Sigmoid colon (tissue), 7 donors: ENCODE measurements at regions of chr3 and their contacts with region 1.

Region 1: GRCh38 chr3:129316131-129317013 is 37.7 kb downstream of the HMCES start:
- DNase-seq: peak; percentile 93
- H3K4me3 ChIP-seq: peak overlapping the region; percentile 74 to 98 (median 89)
- H3K27ac ChIP-seq: peak overlapping the region; percentile 92 to 95 (median 92)
- H3K4me1 ChIP-seq: peaks cover 2 to 25% (median 19%) of the 10 kb centered on the region in 4 donors
- H3K27me3 ChIP-seq: no peaks in the 10 kb centered on the region
- CTCF ChIP-seq: peak; percentile 7 to 46 (median 34)
- EP300 ChIP-seq: peak in 1 of 4 donors; percentile 17
- POLR2A ChIP-seq: peak; percentile 99

Region 2: GRCh38 chr3:129183569-129184395 is 132.6 kb before region 1 on chr3 and contains the start of gene CNBP:
- intact Hi-C with region 1: loop called (anchors 2 kb)
- DNase-seq: peak; percentile 96
- H3K4me3 ChIP-seq: peak within 1 kb of the TSS; percentile 82 to 97 (median 92)
- H3K27ac ChIP-seq: peak within 1 kb of the TSS; percentile 99
- H3K4me1 ChIP-seq: peaks cover 0 to 58% (median 46%) of the 10 kb centered on the region in 4 donors
- H3K27me3 ChIP-seq: no peaks in the 10 kb centered on the region
- CTCF ChIP-seq: no peak
- EP300 ChIP-seq: peak in 1 of 4 donors; percentile 9
- POLR2A ChIP-seq: peak; percentile 97
- total RNA-seq, gene CNBP: 398 to 687 (median 623) TPM

Region 3: GRCh38 chr3:129278439-129278970 is 37.9 kb before region 1 on chr3 and contains the start of gene HMCES:
- intact Hi-C with region 1: loop called (anchors 2 kb)
- DNase-seq: peak; percentile 96
- H3K4me3 ChIP-seq: peak within 1 kb of the TSS; percentile 80 to 96 (median 91)
- H3K27ac ChIP-seq: peak within 1 kb of the TSS; percentile 93 to 97 (median 94)
- H3K4me1 ChIP-seq: peaks cover 0 to 22% (median 19%) of the 10 kb centered on the region in 4 donors
- H3K27me3 ChIP-seq: no peaks in the 10 kb centered on the region
- CTCF ChIP-seq: no peak
- EP300 ChIP-seq: peak in 1 of 4 donors; percentile 3
- POLR2A ChIP-seq: peak; percentile 69 to 75
- total RNA-seq, gene HMCES: 15.2 to 22.5 (median 20.2) TPM

Region 4: GRCh38 chr3:129304146-129304961 is 12.0 kb before region 1 on chr3:
- intact Hi-C with region 1: loop called (anchors 1 kb)
- DNase-seq: no peak
- H3K4me3 ChIP-seq: no peak overlapping the region
- H3K27ac ChIP-seq: peak overlapping the region; percentile 68 to 82 (median 74)
- H3K4me1 ChIP-seq: peaks cover 0 to 11% (median 3%) of the 10 kb centered on the region in 4 donors
- H3K27me3 ChIP-seq: no peaks in the 10 kb centered on the region
- CTCF ChIP-seq: no peak
- EP300 ChIP-seq: no peak
- POLR2A ChIP-seq: no peak

Region 5: GRCh38 chr3:129399145-129399894 is 82.9 kb after region 1 on chr3:
- intact Hi-C with region 1: loop called (anchors 2 kb)
- DNase-seq: peak; percentile 93
- H3K4me3 ChIP-seq: peak overlapping the region; percentile 75 to 88 (median 86)
- H3K27ac ChIP-seq: peak overlapping the region; percentile 80 to 88 (median 86)
- H3K4me1 ChIP-seq: peaks cover 0 to 23% (median 17%) of the 10 kb centered on the region in 4 donors
- H3K27me3 ChIP-seq: no peaks in the 10 kb centered on the region
- CTCF ChIP-seq: peak; percentile 70 to 79 (median 74)
- EP300 ChIP-seq: no peak
- POLR2A ChIP-seq: no peak

Region 6: DNA sequence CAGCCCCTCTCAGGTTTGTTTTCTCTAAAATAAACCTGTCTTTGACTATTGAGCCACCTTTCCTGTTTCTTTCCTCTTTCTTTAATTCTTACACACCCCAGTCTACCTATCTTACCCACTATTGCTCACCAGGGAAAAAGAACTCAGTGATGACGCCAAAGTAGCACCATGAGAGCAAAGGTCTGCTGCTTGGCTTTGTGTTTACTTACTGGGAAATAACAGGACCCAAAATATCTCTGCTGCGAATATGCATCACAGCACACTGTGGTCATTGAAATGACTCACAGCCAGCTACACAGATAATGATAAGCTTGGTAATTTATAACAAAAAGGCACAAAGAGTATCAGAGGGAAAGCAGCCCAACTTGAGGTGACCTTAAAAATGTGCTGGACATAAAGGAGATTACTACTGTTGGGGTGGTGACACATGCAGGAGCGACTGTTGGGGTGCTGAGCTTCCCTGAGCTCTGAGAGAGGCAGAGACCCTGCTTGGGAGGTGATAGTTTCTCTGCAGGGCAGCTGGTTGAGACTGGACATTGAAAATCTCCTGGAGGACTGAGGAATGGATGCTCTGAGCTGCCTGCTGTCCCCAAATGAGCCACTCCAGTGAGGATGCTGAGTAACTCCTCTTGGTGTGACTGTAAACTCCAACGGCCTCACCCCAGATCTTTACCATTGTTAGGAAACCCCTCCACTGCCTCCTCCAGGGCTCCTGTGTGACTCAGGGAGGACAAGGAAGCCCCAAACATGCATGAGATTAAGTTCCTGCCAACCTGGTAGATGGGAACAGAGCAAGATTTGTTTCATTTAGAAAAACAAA is 97.5 kb after region 1 on chr3:
- intact Hi-C with region 1: no loop called
- DNase-seq: no peak
- H3K4me3 ChIP-seq: no peak overlapping the region
- H3K27ac ChIP-seq: no peak overlapping the region
- H3K4me1 ChIP-seq: no peaks in the 10 kb centered on the region
- H3K27me3 ChIP-seq: no peaks in the 10 kb centered on the region
- CTCF ChIP-seq: no peak
- EP300 ChIP-seq: no peak
- POLR2A ChIP-seq: no peak

Region 7: GRCh38 chr3:129893581-129894070 is 577.3 kb after region 1 on chr3 and contains the start of gene TMCC1:
- intact Hi-C with region 1: no loop called
- DNase-seq: peak; percentile 87
- H3K4me3 ChIP-seq: peak within 1 kb of the TSS; percentile 73 to 92 (median 82)
- H3K27ac ChIP-seq: peak within 1 kb of the TSS; percentile 91 to 94 (median 92)
- H3K4me1 ChIP-seq: peaks cover 0 to 44% (median 37%) of the 10 kb centered on the region in 4 donors
- H3K27me3 ChIP-seq: no peaks in the 10 kb centered on the region
- CTCF ChIP-seq: no peak
- EP300 ChIP-seq: no peak
- POLR2A ChIP-seq: no peak
- total RNA-seq, gene TMCC1: 27.6 to 35.2 (median 29.8) TPM